MCF 10A (cell line): ENCODE measurements at regions of chr10 and their contacts with region 1.

Region 1: GRCh38 chr10:5583525-5584175 is 58.9 kb downstream of the CALML3 start:
- DNase-seq: peak; percentile 87
- H3K4me3 Mint-ChIP-seq: peak overlapping the region; percentile 51
- H3K27ac Mint-ChIP-seq: peak overlapping the region; percentile 92
- H3K4me1 Mint-ChIP-seq: peaks cover 30% of the 10 kb centered on the region
- H3K27me3 Mint-ChIP-seq: no peaks in the 10 kb centered on the region
- CTCF ChIP-seq: no peak

Region 2: DNA sequence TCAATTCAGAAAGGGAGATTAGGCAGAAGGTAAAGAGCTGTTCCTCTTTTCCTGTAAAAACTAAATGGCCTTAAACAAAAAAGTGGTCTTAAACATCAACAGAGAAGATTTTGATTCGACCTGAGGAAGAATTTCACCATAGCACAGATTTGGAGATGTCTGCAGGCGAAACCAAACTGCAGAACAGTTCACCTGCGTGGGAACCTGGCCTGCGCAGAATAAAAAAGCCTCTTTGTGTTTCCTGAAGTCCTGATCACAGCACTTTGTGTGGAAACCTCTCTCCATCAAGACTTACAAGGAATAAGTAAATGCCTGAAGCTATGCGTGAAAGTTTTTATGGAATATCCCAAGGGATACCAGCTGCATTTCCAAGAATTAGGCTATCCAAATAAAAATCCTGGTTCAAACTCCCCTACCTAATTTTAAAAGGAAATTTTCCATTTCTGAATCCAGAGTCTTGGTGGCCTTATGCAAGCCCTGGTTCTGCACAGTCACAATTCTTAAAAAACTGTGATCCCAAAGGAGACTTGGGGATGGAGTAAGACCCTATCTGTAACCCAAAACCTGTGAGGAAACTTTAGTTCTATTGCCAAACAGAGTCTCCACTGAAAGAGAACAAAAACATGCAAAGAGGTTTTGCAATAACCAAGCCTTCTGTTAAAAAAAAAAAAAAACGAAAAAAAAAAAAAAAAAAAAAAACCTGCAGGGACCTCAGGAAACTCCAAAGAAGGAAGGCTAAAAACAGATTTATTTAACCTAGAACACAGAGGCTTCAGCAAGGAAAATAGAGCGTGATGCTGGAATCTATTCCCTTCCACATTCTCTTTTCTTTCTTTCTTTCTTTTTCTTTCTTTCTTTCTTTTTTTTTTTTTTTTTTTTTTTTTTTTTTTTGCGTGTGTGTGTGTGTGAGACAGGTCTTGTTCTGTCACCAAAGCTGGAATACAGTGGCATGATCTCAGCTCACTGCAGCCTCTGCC is 48.5 kb before region 1 on chr10:
- CTCF ChIA-PET with region 1: no interaction called
- POLR2A ChIA-PET with region 1: interaction called, 13 read pairs
- intact Hi-C with region 1: no loop called
- DNase-seq: peak; percentile 88
- H3K4me3 Mint-ChIP-seq: peak overlapping the region; percentile 33
- H3K27ac Mint-ChIP-seq: no peak overlapping the region
- H3K4me1 Mint-ChIP-seq: peaks cover 29% of the 10 kb centered on the region
- H3K27me3 Mint-ChIP-seq: no peaks in the 10 kb centered on the region
- CTCF ChIP-seq: no peak

Region 3: GRCh38 chr10:5548527-5549223 is 35.0 kb before region 1 on chr10:
- CTCF ChIA-PET with region 1: no interaction called
- POLR2A ChIA-PET with region 1: interaction called, 88 read pairs
- intact Hi-C with region 1: loop called (anchors 2 kb)
- DNase-seq: peak; percentile 91
- H3K4me3 Mint-ChIP-seq: no peak overlapping the region
- H3K27ac Mint-ChIP-seq: no peak overlapping the region
- H3K4me1 Mint-ChIP-seq: peaks cover 38% of the 10 kb centered on the region
- H3K27me3 Mint-ChIP-seq: no peaks in the 10 kb centered on the region
- CTCF ChIP-seq: no peak

Region 4: GRCh38 chr10:5563991-5564536 is 19.6 kb before region 1 on chr10:
- CTCF ChIA-PET with region 1: no interaction called
- POLR2A ChIA-PET with region 1: interaction called, 31 read pairs
- intact Hi-C with region 1: loop called (anchors 2 kb)
- DNase-seq: peak; percentile 47
- H3K4me3 Mint-ChIP-seq: no peak overlapping the region
- H3K27ac Mint-ChIP-seq: peak overlapping the region; percentile 54
- H3K4me1 Mint-ChIP-seq: peaks cover 40% of the 10 kb centered on the region
- H3K27me3 Mint-ChIP-seq: no peaks in the 10 kb centered on the region
- CTCF ChIP-seq: no peak

Region 5: GRCh38 chr10:5595591-5596590 is 12.2 kb after region 1 on chr10:
- CTCF ChIA-PET with region 1: interaction called, 4 read pairs
- POLR2A ChIA-PET with region 1: interaction called, 55 read pairs
- intact Hi-C with region 1: loop called (anchors 1 kb)
- DNase-seq: peak; percentile 95
- H3K4me3 Mint-ChIP-seq: peak overlapping the region; percentile 43
- H3K27ac Mint-ChIP-seq: peak overlapping the region; percentile 60
- H3K4me1 Mint-ChIP-seq: peaks cover 25% of the 10 kb centered on the region
- H3K27me3 Mint-ChIP-seq: no peaks in the 10 kb centered on the region
- CTCF ChIP-seq: no peak

Region 6: GRCh38 chr10:5614155-5614721 is 30.6 kb after region 1 on chr10:
- CTCF ChIA-PET with region 1: interaction called, 4 read pairs
- POLR2A ChIA-PET with region 1: interaction called, 41 read pairs
- intact Hi-C with region 1: no loop called
- DNase-seq: peak; percentile 86
- H3K4me3 Mint-ChIP-seq: peak overlapping the region; percentile 19
- H3K27ac Mint-ChIP-seq: peak overlapping the region; percentile 93
- H3K4me1 Mint-ChIP-seq: peaks cover 72% of the 10 kb centered on the region
- H3K27me3 Mint-ChIP-seq: no peaks in the 10 kb centered on the region
- CTCF ChIP-seq: no peak

Region 7: GRCh38 chr10:6068422-6068821 is 484.8 kb after region 1 on chr10:
- CTCF ChIA-PET with region 1: no interaction called
- POLR2A ChIA-PET with region 1: no interaction called
- intact Hi-C with region 1: no loop called
- DNase-seq: no peak
- H3K4me3 Mint-ChIP-seq: no peak overlapping the region
- H3K27ac Mint-ChIP-seq: no peak overlapping the region
- H3K4me1 Mint-ChIP-seq: no peaks in the 10 kb centered on the region
- H3K27me3 Mint-ChIP-seq: peaks cover 65% of the 10 kb centered on the region
- CTCF ChIP-seq: no peak